Posterior vena cava (tissue), 2 donors: ENCODE measurements at regions of chr7 and their contacts with region 1.

Region 1: DNA sequence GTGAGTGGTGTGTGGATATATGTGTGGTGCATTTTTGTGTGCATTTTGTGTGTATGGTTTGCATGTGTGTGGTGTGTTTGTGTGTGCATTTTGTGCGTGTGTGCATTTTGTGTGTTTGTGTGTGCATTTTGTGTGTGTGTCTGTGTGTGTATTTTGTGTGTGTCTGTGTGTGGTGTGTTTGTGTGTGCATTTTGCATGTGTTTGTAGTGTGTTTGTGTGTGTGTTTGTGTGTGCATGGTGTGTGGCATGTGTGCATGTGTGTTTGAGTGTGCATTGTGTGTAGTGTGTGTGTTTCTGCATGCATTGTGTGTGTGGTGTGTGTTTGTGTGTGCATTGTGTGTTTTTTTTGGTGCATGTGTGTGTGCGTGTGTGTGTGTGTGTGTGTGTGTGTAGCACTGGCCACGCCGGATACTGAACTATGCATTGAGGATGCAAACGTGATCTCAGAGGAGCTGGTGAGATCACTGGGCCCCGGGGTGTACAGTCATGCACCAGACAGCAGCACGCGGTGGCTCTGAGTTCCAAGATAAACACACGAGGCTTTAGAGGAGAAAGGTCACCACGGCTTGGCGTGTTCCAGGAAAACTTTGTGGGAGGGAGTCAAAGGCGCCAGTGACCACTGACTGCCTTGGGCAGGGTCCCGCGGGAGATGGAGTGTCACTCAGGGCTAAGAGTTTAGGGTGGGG is 106.6 kb upstream of the SHH start:
- DNase-seq: peak; percentile 86

Region 2: GRCh38 chr7:155804897-155805825 is 113.7 kb before region 1 on chr7:
- intact Hi-C with region 1: no loop called
- DNase-seq: peak; percentile 84

Region 3: DNA sequence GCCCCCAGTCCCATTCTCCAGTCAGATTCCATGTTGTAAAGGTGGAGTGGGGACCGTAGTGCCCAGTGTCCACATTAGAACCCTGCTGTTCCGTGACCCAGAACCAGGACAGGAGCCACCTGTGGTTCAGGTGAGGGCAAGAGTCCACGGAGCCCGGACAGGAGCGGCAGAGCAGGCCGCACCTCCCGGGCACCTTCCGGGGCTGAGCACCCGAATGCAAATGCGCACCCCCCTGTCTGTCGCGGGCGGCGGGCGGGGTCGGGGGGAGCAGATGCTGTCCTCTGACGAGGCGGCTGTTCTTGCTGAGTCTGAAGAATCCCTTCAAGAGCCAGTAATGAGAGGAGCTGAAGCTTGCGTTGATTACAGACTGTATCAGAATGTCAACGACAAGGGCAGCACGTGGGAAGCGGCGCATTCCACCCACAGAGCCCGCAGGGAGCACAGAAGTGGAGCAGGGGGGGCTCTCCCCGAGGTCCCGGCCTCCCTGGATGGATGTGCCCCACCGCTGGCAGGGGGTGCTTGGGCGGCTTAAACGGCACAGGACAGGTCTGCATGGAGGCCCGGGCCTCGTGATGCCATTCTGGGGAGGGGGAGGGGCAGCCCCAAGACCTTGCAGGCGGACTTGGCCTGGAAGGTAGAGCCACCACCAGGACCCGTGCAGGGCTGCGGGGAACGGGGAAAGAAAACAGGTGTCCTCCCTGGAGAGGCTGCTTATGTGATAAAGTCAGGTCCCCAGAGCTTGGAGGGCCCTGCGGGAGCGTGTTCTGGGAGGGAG is 314.3 kb after region 1 on chr7:
- intact Hi-C with region 1: no loop called
- DNase-seq: no peak

Region 4: DNA sequence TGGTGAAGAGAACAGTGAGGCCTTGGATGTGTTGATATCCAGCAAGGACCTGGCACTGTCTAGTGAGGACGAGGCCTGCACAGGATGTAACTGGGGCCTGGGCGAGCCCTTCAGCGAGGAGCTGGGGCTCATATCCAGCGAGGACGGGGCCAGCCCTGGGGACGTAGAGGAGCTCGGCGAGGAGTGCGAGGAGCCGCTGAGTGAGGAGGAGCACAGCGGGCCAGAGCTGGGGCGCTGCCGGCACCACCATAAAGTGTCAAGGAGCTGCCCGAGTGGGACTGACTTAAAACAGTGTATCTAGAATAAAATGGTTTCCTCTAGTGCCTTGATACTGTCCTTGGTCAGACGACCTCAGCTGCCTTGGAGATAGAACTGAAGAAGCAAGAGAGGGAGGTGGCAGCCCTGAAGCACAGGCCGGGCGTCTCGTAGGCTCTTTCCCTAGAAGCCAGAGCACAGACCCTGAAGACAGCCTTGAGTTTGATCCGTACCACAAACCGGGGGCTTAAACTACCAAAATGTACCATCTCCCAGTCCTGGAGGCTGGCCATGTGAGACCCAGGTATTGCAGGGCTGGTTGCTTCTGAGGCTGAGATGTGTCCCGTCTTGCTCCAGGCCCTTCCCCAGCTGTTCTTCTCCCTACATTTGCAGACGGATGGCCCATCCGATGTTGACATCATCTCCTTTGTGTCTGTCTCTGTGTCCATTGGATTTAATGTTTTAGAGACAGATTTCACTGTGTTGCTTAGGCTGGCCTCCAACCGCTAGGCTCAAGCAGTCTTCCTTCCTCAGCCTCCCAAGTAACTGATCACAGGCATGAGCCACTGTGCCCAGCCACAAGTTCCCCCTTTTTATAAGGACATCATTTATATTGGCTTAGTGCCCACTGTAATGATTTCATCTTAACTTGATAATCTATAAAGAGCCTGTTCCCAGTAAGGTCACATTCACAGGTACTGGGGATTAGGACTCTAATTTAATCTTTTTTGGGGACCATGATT is 1453.7 kb after region 1 on chr7:
- intact Hi-C with region 1: loop called in 1 of 2 experiments (anchors 5 kb)
- DNase-seq: no peak